ENCODE measurements at regions of chr2 and their contacts with region 1.

Region 1: DNA sequence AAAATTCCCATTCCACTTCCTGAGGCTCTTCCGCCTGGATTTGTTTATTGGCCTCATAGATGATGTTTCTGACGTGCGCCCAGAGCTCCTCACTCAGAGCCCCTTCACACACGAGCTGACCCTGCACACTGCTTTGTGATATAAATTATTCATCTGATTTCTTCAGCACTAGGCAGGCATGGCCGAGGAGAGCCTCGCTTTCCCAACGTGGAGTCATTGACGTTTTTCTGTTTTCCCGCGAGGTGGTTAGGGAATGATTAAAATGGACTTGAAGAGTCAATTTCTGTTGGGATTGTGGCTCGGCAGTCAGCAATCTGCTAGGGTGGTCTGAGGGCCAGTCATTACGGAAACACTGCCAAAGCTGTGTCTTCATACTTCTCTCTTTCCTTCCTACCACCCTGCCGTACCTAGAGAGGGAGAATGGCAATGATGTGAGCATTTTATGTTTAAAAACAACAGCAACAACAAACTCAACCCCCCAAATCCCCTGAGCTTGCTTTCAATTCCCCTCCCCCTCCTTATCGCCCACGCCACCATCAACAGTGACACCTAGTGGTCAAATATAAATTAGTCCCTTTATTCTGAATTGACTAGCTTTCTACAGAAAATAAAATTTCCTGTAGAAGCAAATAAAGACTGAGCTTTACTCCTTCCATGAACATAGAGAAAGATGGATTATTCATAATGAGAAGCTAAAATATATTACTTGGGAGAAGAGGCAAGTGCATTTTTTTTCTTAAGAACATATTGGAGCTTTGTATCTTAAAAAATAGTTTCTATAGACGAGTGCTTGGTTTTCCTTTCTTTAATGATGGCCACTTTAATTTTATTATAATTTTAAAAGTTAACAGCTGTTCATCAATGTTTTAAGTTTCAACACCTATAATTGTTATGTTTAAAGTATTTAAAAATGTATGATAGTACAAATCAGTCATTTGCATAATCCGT is 285.1 kb downstream of the MTX2 start:
- DNase-seq: peak; percentile 56
- ATAC-seq: peak; percentile 49
- H3K4me3 Mint-ChIP-seq: peak overlapping the region; percentile 60
- H3K27ac Mint-ChIP-seq: peak overlapping the region; percentile 26
- H3K4me1 Mint-ChIP-seq: peaks cover 11% of the 10 kb centered on the region
- H3K27me3 Mint-ChIP-seq: peaks cover 33% of the 10 kb centered on the region

Region 2: GRCh38 chr2:176421297-176422050 is 132.9 kb before region 1 on chr2:
- CTCF ChIA-PET with region 1: no interaction called
- POLR2A ChIA-PET with region 1: no interaction called
- intact Hi-C with region 1: no loop called
- DNase-seq: no peak
- ATAC-seq: no peak
- H3K4me3 Mint-ChIP-seq: no peak overlapping the region
- H3K27ac Mint-ChIP-seq: no peak overlapping the region
- H3K4me1 Mint-ChIP-seq: no peaks in the 10 kb centered on the region
- H3K27me3 Mint-ChIP-seq: peaks cover 16% of the 10 kb centered on the region

Region 3: GRCh38 chr2:176565641-176566323 is 11.4 kb after region 1 on chr2:
- CTCF ChIA-PET with region 1: interaction called, 14 read pairs
- POLR2A ChIA-PET with region 1: no interaction called
- intact Hi-C with region 1: no loop called
- DNase-seq: peak; percentile 4
- ATAC-seq: no peak
- H3K4me3 Mint-ChIP-seq: no peak overlapping the region
- H3K27ac Mint-ChIP-seq: no peak overlapping the region
- H3K4me1 Mint-ChIP-seq: no peaks in the 10 kb centered on the region
- H3K27me3 Mint-ChIP-seq: peaks cover 38% of the 10 kb centered on the region

Region 4: GRCh38 chr2:176638167-176639015 is 84.0 kb after region 1 on chr2:
- CTCF ChIA-PET with region 1: interaction called, 3 read pairs
- POLR2A ChIA-PET with region 1: no interaction called
- intact Hi-C with region 1: loop called in 1 of 2 experiments (anchors 2 kb)
- DNase-seq: peak; percentile 80
- ATAC-seq: peak; percentile 86
- H3K4me3 Mint-ChIP-seq: peak overlapping the region; percentile 55
- H3K27ac Mint-ChIP-seq: no peak overlapping the region
- H3K4me1 Mint-ChIP-seq: peaks cover 5% of the 10 kb centered on the region
- H3K27me3 Mint-ChIP-seq: peaks cover 44% of the 10 kb centered on the region

Region 5: DNA sequence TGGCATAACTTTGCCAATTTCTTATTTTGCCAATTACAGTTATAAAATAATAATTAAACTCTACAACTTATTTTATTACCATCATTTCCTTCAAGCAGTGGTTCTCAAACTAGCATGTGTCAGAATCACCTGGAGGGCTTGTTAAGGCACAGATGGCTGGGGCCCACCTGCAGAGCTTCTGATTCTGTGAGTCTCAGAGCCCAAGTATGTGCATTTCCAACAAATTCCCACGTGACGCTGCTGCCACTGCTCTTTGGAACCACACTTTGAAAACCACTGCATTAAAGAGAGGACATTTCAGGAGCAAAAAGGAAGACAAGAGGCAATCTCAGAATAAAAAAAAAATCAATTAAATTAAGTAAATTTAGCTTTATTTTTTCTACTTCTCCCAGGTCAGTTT is 564.3 kb after region 1 on chr2:
- CTCF ChIA-PET with region 1: no interaction called
- POLR2A ChIA-PET with region 1: no interaction called
- intact Hi-C with region 1: no loop called
- DNase-seq: no peak
- ATAC-seq: no peak
- H3K4me3 Mint-ChIP-seq: no peak overlapping the region
- H3K27ac Mint-ChIP-seq: no peak overlapping the region
- H3K4me1 Mint-ChIP-seq: no peaks in the 10 kb centered on the region
- H3K27me3 Mint-ChIP-seq: peaks cover 3% of the 10 kb centered on the region